IMR-90 (cell line): ENCODE measurements at regions of chr7 and their contacts with region 1.

Region 1: GRCh38 chr7:106064771-106065585 is 47.1 kb downstream of the SYPL1 start:
- DNase-seq: peak; percentile 88
- ATAC-seq: peak; percentile 91
- H3K4me3 ChIP-seq: no peak overlapping the region
- H3K27ac ChIP-seq: peak overlapping the region; percentile 10; the same call in 1 of the 2 replicates
- H3K4me1 ChIP-seq: peaks cover 7% of the 10 kb centered on the region; the same call in 1 of the 2 replicates
- H3K27me3 ChIP-seq: no peaks in the 10 kb centered on the region
- CTCF ChIP-seq: no peak
- POLR2A ChIP-seq: no peak
- RAD21 ChIP-seq: no peak

Region 2: GRCh38 chr7:106112117-106112971 is 47.4 kb after region 1 on chr7 and contains the start of gene SYPL1:
- CTCF ChIA-PET with region 1: no interaction called
- POLR2A ChIA-PET with region 1: no interaction called
- dilution Hi-C with region 1: no loop called
- in situ Hi-C with region 1: no loop called
- intact Hi-C with region 1: loop called (anchors 5 kb)
- DNase-seq: peak; percentile 88
- ATAC-seq: peak; percentile 94
- H3K4me3 ChIP-seq: peak within 1 kb of the TSS; percentile 93
- H3K27ac ChIP-seq: peak within 1 kb of the TSS; percentile 98
- H3K4me1 ChIP-seq: peaks cover 2% of the 10 kb centered on the region; the same call in 1 of the 2 replicates
- H3K27me3 ChIP-seq: no peaks in the 10 kb centered on the region
- CTCF ChIP-seq: no peak
- POLR2A ChIP-seq: no peak; the same call in none of the 2 replicates
- RAD21 ChIP-seq: no peak
- total RNA-seq, gene SYPL1: 19.0 and 35.6 TPM in 2 replicates

Region 3: GRCh38 chr7:106247841-106248240 is 182.9 kb after region 1 on chr7:
- CTCF ChIA-PET with region 1: no interaction called
- POLR2A ChIA-PET with region 1: no interaction called
- dilution Hi-C with region 1: no loop called
- in situ Hi-C with region 1: no loop called
- intact Hi-C with region 1: no loop called
- DNase-seq: no peak
- ATAC-seq: no peak
- H3K4me3 ChIP-seq: no peak overlapping the region
- H3K27ac ChIP-seq: no peak overlapping the region
- H3K4me1 ChIP-seq: no peaks in the 10 kb centered on the region
- H3K27me3 ChIP-seq: no peaks in the 10 kb centered on the region
- CTCF ChIP-seq: no peak
- POLR2A ChIP-seq: 0 out of 2 replicates have a peak, but pooled peaks have one; percentile 19
- RAD21 ChIP-seq: no peak